ENCODE measurements at regions of chr17 and their contacts with region 1.

Region 1: GRCh38 chr17:48678141-48678971 is 44.0 kb downstream of the PRAC1 start:
- DNase-seq: peak; percentile 74 to 86
- ATAC-seq: peak; percentile 96 to 98
- H3K4me3 ChIP-seq: peak overlapping the region; percentile 3; the same call in 1 of the 3 replicates
- H3K27ac ChIP-seq: peak overlapping the region; percentile 28 to 78
- H3K4me1 ChIP-seq: peaks cover 8% of the 10 kb centered on the region; the same call in 1 of the 3 replicates
- CTCF ChIP-seq: peak; percentile 99
- EP300 ChIP-seq: no peak
- POLR2A ChIP-seq: no peak
- RAD21 ChIP-seq: peak; percentile 91 to 97

Region 2: DNA sequence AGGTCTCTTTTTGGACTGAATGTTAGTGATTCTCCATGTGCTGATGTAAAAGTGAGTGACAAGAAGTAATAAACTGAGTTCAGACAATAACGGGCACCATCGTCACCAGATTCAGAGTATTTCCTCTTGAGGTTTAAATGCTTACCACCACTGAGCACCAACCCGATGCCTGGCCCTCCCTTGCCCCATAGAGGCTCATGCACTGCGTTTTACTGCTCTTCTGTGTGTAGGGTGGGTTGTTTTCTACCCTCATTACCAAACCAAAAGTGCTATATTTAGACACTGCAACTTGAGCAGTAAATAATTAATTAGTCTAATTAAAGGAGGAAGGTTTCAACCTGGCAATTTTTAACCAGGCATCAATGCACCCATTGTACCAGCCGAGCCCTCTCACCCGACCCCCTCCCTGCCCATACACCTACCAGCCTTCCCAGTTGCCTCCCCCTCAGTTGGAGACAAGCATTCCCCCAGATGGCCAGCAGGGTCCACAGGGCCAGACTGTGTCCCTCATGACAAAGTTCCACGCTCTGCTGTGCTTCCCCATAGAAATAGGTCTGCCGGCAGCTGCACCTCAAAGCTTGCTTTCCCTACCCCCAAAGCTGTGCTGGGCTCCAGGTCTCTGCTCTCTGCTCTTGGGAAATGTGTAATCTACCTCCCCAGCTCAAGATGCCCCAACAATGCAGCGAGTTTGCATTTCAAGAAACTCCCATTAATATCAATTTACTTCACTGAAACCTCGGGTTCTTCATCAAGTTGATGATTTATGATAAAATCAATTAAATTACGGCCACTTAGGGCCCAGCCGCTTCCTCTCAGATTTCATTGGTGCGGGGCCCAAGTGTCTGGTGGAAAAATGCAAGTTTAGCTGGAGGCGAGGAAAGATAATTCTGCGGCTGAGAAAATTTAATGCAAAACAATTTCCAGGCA is 116.2 kb before region 1 on chr17:
- CTCF ChIA-PET with region 1: no interaction called
- POLR2A ChIA-PET with region 1: no interaction called
- DNase-seq: peak in 1 of 2 experiments; percentile 66
- ATAC-seq: peak; percentile 74 to 87
- H3K4me3 ChIP-seq: no peak overlapping the region
- H3K27ac ChIP-seq: no peak overlapping the region
- H3K4me1 ChIP-seq: peaks cover 10% of the 10 kb centered on the region
- CTCF ChIP-seq: no peak
- EP300 ChIP-seq: no peak
- POLR2A ChIP-seq: no peak
- RAD21 ChIP-seq: no peak

Region 3: GRCh38 chr17:48636177-48637018 is 42.0 kb before region 1 on chr17:
- CTCF ChIA-PET with region 1: interaction called, 15 read pairs
- POLR2A ChIA-PET with region 1: no interaction called
- DNase-seq: peak; percentile 95 to 97
- ATAC-seq: peak; percentile 85 to 95
- H3K4me3 ChIP-seq: no peak overlapping the region
- H3K27ac ChIP-seq: peak overlapping the region; percentile 53 to 74
- H3K4me1 ChIP-seq: peaks cover 48% of the 10 kb centered on the region
- CTCF ChIP-seq: peak; percentile 93
- EP300 ChIP-seq: no peak
- POLR2A ChIP-seq: no peak
- RAD21 ChIP-seq: peak; percentile 41 to 49; a peak in 4 of 5 replicates

Region 4: GRCh38 chr17:48693178-48693577 is 14.8 kb after region 1 on chr17:
- CTCF ChIA-PET with region 1: interaction called, 49 read pairs
- POLR2A ChIA-PET with region 1: no interaction called
- DNase-seq: peak in 1 of 2 experiments; percentile 33
- ATAC-seq: peak in 1 of 2 experiments; percentile 69; a peak in 3 of 6 replicates
- H3K4me3 ChIP-seq: no peak overlapping the region
- H3K27ac ChIP-seq: no peak overlapping the region
- H3K4me1 ChIP-seq: 0 out of 3 replicates have a peak, but pooled peaks cover 5% of the 10 kb centered on the region
- CTCF ChIP-seq: no peak
- EP300 ChIP-seq: no peak
- POLR2A ChIP-seq: no peak
- RAD21 ChIP-seq: no peak

Region 5: DNA sequence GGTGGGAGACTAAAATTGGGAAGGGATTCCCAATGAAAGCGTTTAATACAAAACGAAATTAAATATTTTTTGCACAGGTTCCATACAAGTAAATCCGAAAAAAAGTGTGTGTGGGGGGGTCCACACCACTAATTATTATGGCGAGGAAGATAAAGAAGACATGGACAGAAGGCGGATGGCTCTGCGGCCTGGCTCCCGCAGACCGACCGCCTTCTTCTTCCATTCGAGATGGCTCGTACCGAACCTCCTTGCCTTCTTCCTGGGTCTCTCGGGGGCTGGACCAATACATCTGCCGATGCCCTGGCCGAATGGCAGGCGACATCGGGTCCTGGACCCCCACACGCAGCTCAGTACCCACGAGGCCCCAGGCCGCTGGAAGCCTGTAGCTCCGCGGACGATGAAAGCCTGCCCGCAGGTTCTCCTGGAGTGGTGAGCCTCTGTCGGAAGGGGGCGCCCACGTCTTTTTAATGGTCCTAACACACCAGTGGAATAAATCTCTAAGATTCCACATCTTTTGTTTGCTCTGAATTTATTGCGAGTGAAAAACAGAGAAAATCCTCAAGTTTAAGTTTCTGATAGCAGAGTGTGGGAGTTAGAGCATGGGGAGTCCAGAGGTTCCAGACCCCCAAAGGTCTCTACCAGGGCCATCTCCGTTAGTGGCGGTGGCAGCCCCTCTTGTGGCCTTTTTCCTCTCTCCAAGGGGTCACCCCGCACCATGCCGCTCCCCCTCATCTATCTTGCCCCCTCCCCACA is 46.1 kb after region 1 on chr17:
- CTCF ChIA-PET with region 1: interaction called, 204 read pairs
- POLR2A ChIA-PET with region 1: no interaction called
- DNase-seq: peak; percentile 68 to 77
- ATAC-seq: peak; percentile 67 to 85
- H3K4me3 ChIP-seq: no peak overlapping the region
- H3K27ac ChIP-seq: 0 out of 6 replicates have a peak overlapping the region, but pooled peaks of 1 of the 2 experiments have one; percentile 13
- H3K4me1 ChIP-seq: peaks cover 13% of the 10 kb centered on the region
- CTCF ChIP-seq: peak; percentile 94
- EP300 ChIP-seq: no peak
- POLR2A ChIP-seq: no peak
- RAD21 ChIP-seq: peak; percentile 98 to 99

Region 6: DNA sequence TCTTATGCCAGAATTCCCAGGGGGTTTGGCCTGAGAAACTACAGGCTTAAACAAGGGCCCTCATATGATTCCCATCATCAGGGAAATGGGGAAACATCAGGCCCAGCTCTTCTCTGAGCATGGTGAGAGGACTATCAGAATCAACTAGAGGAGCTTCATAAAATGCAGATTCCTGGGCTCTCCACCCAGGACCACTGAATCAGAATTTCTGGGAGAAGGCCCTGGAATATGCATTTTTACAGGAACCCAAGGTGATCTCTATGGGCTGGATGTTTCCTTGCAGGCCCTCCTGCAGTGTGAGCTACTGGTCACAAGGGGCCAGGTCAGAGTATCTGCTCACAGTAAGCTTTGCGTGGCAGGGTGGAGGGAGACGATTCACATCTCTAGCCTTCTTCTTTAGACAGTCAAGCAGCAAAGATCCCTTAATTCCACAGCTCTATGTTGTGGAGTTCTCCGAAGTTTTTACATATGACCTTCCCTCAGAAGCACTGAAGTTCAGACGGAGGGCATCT is 89.0 kb after region 1 on chr17:
- CTCF ChIA-PET with region 1: interaction called, 26 read pairs
- POLR2A ChIA-PET with region 1: no interaction called
- DNase-seq: no peak
- ATAC-seq: peak; percentile 65 to 83; a peak in 3 of 6 replicates
- H3K4me3 ChIP-seq: no peak overlapping the region
- H3K27ac ChIP-seq: no peak overlapping the region
- H3K4me1 ChIP-seq: no peaks in the 10 kb centered on the region
- CTCF ChIP-seq: no peak
- EP300 ChIP-seq: no peak
- POLR2A ChIP-seq: no peak
- RAD21 ChIP-seq: no peak

Region 7: GRCh38 chr17:48860034-48860433 is 181.7 kb after region 1 on chr17:
- CTCF ChIA-PET with region 1: interaction called, 14 read pairs
- POLR2A ChIA-PET with region 1: no interaction called
- DNase-seq: peak in 1 of 2 experiments; percentile 41
- ATAC-seq: peak; percentile 47 to 71; a peak in 4 of 6 replicates
- H3K4me3 ChIP-seq: no peak overlapping the region
- H3K27ac ChIP-seq: no peak overlapping the region
- H3K4me1 ChIP-seq: no peaks in the 10 kb centered on the region
- CTCF ChIP-seq: no peak
- EP300 ChIP-seq: no peak
- POLR2A ChIP-seq: no peak
- RAD21 ChIP-seq: no peak